PC-9 (cell line): ENCODE measurements at regions of chr3 and their contacts with region 1.

Region 1: GRCh38 chr3:180601688-180602666 is at the start of gene TTC14:
- DNase-seq: peak; percentile 93 to 97
- H3K4me3 ChIP-seq: peak within 1 kb of the TSS; percentile 74
- H3K27ac ChIP-seq: peak within 1 kb of the TSS; percentile 77
- H3K4me1 ChIP-seq: peaks cover 18% of the 10 kb centered on the region
- H3K27me3 ChIP-seq: no peaks in the 10 kb centered on the region
- CTCF ChIP-seq: no peak
- total RNA-seq, gene TTC14: 51.1 and 55.4 TPM in 2 replicates

Region 2: DNA sequence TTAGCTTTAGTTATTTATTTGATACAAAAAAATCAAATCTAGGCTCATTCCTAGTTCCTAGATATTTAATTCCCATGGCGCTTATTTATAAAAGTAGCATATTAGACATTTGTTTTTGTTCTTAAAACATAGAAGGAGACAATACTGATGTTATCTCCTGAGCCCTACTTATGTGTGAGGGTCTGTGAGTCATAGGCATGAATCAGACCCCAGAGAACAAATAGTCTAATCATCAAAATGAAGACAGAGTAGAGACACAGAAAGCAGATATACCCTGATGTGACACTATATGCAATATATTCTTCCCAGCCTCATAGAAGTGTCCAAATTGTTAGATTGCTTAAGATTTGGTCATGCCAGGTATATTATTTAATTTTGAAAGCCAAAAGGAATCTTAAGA is 610.1 kb before region 1 on chr3:
- CTCF ChIA-PET with region 1: no interaction called
- POLR2A ChIA-PET with region 1: interaction called, 24 read pairs
- intact Hi-C with region 1: no loop called
- DNase-seq: peak in 1 of 2 experiments; percentile 41
- H3K4me3 ChIP-seq: no peak overlapping the region
- H3K27ac ChIP-seq: peak overlapping the region; percentile 60
- H3K4me1 ChIP-seq: peaks cover 20% of the 10 kb centered on the region
- H3K27me3 ChIP-seq: no peaks in the 10 kb centered on the region
- CTCF ChIP-seq: no peak

Region 3: DNA sequence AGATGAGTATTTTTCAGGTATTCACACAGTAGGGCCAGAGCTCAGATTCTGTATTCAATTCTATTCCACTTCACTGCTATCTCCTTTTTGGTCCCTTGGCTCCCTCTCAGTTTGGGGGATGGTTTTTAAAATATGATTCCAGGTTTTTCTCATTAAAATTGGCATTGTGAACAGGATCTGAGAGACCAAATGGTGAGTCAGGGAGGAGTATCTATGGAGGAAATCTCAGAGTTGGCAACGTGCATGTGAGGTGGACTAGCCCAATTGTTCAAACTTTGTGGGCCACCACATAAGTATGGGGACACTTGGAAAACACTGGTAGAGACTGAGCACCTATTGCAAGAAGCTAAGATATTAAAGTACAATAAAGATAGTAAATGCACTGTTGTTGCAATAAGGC is 53.9 kb before region 1 on chr3:
- CTCF ChIA-PET with region 1: no interaction called
- POLR2A ChIA-PET with region 1: no interaction called
- intact Hi-C with region 1: no loop called
- DNase-seq: no peak
- H3K4me3 ChIP-seq: no peak overlapping the region
- H3K27ac ChIP-seq: no peak overlapping the region
- H3K4me1 ChIP-seq: no peaks in the 10 kb centered on the region
- H3K27me3 ChIP-seq: no peaks in the 10 kb centered on the region
- CTCF ChIP-seq: no peak